Sigmoid colon (tissue), 7 donors: ENCODE measurements at regions of chr6 and their contacts with region 1.

Region 1: DNA sequence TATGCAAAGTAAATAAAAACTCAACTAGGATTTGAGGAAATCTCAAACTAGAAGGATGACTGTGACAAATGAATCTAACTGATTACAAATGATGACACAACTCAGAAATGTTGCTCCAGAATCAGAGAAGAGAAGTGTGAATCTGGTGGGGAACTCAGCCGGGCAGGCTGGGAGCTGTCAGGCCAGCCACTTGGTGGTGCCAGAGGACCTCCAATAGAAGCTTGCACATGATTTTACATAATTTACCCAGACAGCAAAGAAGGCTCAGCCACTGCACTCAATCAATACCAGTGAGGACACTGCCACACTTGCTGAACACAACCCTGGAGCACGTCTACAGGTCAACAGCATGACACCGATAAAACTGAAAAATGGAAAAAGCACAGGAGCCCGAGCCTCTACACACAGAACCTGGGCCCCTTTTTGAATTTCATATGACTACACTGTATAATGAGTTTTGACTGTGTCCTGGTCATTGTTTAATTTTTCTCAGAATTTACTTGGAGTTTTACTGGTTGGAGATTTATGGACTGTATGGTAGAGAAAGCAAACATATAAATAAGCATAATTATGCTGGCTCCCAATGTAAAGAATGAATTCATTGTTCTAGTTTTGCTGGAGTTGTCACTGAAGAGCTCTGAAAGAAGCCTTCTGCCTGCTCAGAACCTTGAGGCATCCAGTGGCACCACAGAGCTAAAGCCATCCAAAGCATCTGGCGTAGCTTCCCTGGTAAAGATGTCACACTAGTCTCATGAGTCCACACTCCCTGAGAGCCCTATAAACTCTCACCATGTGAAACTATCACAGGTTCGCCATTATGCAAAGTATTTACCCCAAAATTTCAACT is 296.5 kb downstream of the THBS2 start:
- DNase-seq: peak; percentile 90
- H3K4me3 ChIP-seq: no peak overlapping the region
- H3K27ac ChIP-seq: peak overlapping the region in 3 of 4 donors; percentile 17 to 40 (median 39)
- H3K4me1 ChIP-seq: peaks cover 0 to 32% (median 14%) of the 10 kb centered on the region in 4 donors
- H3K27me3 ChIP-seq: no peaks in the 10 kb centered on the region
- CTCF ChIP-seq: peak; percentile 72 to 83 (median 75)
- EP300 ChIP-seq: no peak
- POLR2A ChIP-seq: no peak

Region 2: DNA sequence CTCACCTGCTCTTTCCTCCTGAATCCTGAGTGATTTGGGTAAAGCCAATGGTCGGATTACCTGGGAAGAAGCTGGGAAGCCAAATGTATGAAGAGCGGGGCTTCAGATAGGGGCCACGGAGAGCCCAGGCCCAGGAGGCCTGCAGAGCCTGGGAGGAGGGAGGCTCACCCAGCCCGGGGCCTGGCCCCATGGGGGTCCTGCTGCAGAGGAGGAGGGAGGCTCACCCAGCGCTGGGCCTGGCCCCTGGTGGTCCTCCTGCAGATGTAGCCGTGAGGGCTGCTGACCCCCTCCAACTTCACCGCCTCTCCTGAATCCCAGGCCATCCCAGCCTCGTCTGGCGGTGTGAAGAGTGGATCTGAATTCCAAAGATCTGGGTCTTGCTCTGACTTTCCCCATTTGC is 71.9 kb before region 1 on chr6:
- intact Hi-C with region 1: no loop called
- DNase-seq: no peak
- H3K4me3 ChIP-seq: no peak overlapping the region
- H3K27ac ChIP-seq: no peak overlapping the region
- H3K4me1 ChIP-seq: peaks cover 0 to 22% (median 6%) of the 10 kb centered on the region in 4 donors
- H3K27me3 ChIP-seq: no peaks in the 10 kb centered on the region
- CTCF ChIP-seq: no peak
- EP300 ChIP-seq: no peak
- POLR2A ChIP-seq: no peak

Region 3: GRCh38 chr6:168895102-168895812 is 61.9 kb before region 1 on chr6:
- intact Hi-C with region 1: loop called (anchors 1 kb)
- DNase-seq: peak; percentile 91
- H3K4me3 ChIP-seq: peak overlapping the region in 2 of 4 donors; percentile 14 to 19
- H3K27ac ChIP-seq: peak overlapping the region in 1 of 4 donors; percentile 20
- H3K4me1 ChIP-seq: peaks cover 0 to 49% (median 14%) of the 10 kb centered on the region in 4 donors
- H3K27me3 ChIP-seq: no peaks in the 10 kb centered on the region
- CTCF ChIP-seq: peak; percentile 83 to 96 (median 88)
- EP300 ChIP-seq: no peak
- POLR2A ChIP-seq: no peak

Region 4: DNA sequence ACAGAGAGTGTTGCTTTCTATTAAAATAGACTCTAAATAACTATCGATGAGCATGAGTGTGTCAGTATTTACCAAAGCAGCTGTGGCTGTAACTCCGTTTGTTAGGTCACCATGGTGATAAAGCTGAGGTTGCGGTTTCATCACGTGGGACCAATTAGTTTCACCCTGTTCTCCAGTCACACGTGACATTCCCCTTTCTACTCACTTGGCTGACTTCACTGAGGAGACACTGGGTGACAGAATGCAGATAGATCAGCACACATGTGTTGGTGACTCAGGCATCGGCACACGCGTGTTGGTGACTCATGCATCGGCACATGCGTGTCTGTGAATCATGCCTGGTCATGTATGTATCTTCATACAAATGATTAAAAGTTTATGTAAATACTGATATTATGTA is 11.1 kb after region 1 on chr6:
- intact Hi-C with region 1: no loop called
- DNase-seq: peak; percentile 86
- H3K4me3 ChIP-seq: no peak overlapping the region
- H3K27ac ChIP-seq: peak overlapping the region in 3 of 4 donors; percentile 7 to 58 (median 52)
- H3K4me1 ChIP-seq: peaks cover 0 to 21% (median 5%) of the 10 kb centered on the region in 4 donors
- H3K27me3 ChIP-seq: no peaks in the 10 kb centered on the region
- CTCF ChIP-seq: no peak
- EP300 ChIP-seq: peak in 2 of 4 donors; percentile 29 to 41
- POLR2A ChIP-seq: no peak

Region 5: GRCh38 chr6:169026175-169026574 is 69.1 kb after region 1 on chr6:
- intact Hi-C with region 1: no loop called
- DNase-seq: no peak
- H3K4me3 ChIP-seq: no peak overlapping the region
- H3K27ac ChIP-seq: peak overlapping the region in 1 of 4 donors; percentile 0
- H3K4me1 ChIP-seq: peaks cover 0 to 20% (median 5%) of the 10 kb centered on the region in 4 donors
- H3K27me3 ChIP-seq: no peaks in the 10 kb centered on the region
- CTCF ChIP-seq: no peak
- EP300 ChIP-seq: no peak
- POLR2A ChIP-seq: no peak

Region 6: DNA sequence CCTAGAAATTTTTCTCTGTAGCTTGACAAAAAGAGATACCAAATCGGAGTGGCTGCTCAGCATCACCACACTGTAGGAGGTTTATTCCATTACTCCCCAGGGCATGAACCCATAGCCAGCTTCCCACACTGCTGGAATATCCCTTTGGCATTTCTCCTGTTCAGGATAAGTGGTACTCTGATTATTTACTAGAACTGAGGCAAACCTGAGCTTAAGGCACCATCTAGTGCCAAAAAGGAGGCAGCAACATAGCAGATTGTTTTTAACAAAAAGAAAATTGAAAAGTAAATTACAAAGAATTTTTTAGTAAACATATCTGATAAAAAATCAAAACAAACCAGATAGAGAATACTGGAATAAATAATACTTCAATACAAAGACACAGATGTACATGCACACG is 563.0 kb after region 1 on chr6:
- intact Hi-C with region 1: loop called (anchors 1 kb)
- DNase-seq: no peak
- H3K4me3 ChIP-seq: no peak overlapping the region
- H3K27ac ChIP-seq: no peak overlapping the region
- H3K4me1 ChIP-seq: peaks cover 0 to 7% (median 3%) of the 10 kb centered on the region in 4 donors
- H3K27me3 ChIP-seq: no peaks in the 10 kb centered on the region
- CTCF ChIP-seq: peak in 2 of 4 experiments; percentile 27 to 51
- EP300 ChIP-seq: no peak
- POLR2A ChIP-seq: no peak

Region 7: DNA sequence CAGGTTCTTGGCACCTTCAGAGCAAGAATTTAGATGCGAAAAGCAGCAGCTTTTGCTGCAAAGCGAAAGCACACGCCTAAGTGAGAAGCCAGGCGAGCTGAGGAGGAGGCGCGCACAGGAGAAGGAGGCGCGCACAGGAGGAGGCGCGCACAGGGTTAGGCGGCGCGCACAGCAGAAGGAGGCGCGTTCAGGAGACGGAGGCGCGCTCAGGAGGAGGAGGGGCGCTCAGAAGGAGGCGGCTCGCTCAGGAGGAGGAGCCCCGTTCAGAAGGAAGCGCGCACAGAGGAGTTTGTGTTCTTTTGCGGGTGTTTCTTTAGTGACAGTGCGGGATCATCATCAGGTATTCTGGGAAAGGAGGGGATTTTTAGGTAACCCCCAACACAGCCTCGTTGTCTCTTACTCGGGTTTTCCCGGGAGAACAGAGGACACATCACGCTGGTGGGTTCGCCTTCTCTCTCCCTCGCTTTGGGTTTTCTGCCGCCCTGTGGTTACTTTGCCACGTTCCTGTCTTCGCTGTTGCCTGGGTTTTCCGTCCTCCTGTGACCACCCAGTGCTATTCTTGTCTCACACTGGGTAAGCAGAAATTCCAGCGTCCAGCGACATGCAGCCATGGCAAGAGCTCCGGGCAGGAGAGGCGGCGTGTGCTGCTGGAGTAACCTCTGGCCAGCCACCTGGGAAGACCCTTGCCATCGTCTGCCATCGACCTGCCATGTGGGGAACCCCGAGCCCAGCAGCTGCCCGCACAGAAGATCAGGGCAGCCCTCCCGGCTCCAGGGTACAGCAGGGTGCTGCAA is 697.7 kb after region 1 on chr6:
- intact Hi-C with region 1: loop called (anchors 5 kb)
- DNase-seq: peak; percentile 89
- H3K4me3 ChIP-seq: peak overlapping the region; percentile 29 to 54 (median 50)
- H3K27ac ChIP-seq: peak overlapping the region; percentile 72 to 80 (median 77)
- H3K4me1 ChIP-seq: peaks cover 0 to 7% (median 6%) of the 10 kb centered on the region in 4 donors
- H3K27me3 ChIP-seq: no peaks in the 10 kb centered on the region
- CTCF ChIP-seq: peak in 1 of 4 experiments; percentile 18
- EP300 ChIP-seq: no peak
- POLR2A ChIP-seq: no peak

Region 8: GRCh38 chr6:169701954-169702839 is 745.1 kb after region 1 on chr6 and contains the starts of genes C6orf120 and WDR27:
- intact Hi-C with region 1: loop called (anchors 10 kb)
- DNase-seq: peak; percentile 98
- H3K4me3 ChIP-seq: peak within 1 kb of the TSS; percentile 83 to 96 (median 94)
- H3K27ac ChIP-seq: peak within 1 kb of the TSS; percentile 92 to 98 (median 98)
- H3K4me1 ChIP-seq: peaks cover 0 to 54% (median 47%) of the 10 kb centered on the region in 4 donors
- H3K27me3 ChIP-seq: no peaks in the 10 kb centered on the region
- CTCF ChIP-seq: no peak
- EP300 ChIP-seq: no peak
- POLR2A ChIP-seq: peak; percentile 94
- total RNA-seq, gene C6orf120: 22.7 to 33.6 (median 30.3) TPM
- total RNA-seq, gene WDR27: 20.0 to 46.0 (median 24.6) TPM